H1 (cell line): ENCODE measurements at regions of chr13 and their contacts with region 1.

Region 1: GRCh38 chr13:30421093-30422053 is 920 bp upstream of the UBE2L5 start:
- DNase-seq: peak in 1 of 2 experiments; percentile 78
- H3K4me3 ChIP-seq: peak overlapping the region; percentile 73 to 83 (median 76)
- H3K27ac ChIP-seq: no peak overlapping the region; the same call in 1 of the 2 replicates
- H3K4me1 ChIP-seq: peaks cover 0 to 9% (median 5%) of the 10 kb centered on the region in 4 experiments; a peak in 6 of 7 replicates
- H3K27me3 ChIP-seq: peaks cover 0 to 5% (median 0%) of the 10 kb centered on the region in 4 experiments; a peak in 4 of 7 replicates
- CTCF ChIP-seq: no peak
- EP300 ChIP-seq: no peak
- POLR2A ChIP-seq: no peak
- RAD21 ChIP-seq: no peak

Region 2: DNA sequence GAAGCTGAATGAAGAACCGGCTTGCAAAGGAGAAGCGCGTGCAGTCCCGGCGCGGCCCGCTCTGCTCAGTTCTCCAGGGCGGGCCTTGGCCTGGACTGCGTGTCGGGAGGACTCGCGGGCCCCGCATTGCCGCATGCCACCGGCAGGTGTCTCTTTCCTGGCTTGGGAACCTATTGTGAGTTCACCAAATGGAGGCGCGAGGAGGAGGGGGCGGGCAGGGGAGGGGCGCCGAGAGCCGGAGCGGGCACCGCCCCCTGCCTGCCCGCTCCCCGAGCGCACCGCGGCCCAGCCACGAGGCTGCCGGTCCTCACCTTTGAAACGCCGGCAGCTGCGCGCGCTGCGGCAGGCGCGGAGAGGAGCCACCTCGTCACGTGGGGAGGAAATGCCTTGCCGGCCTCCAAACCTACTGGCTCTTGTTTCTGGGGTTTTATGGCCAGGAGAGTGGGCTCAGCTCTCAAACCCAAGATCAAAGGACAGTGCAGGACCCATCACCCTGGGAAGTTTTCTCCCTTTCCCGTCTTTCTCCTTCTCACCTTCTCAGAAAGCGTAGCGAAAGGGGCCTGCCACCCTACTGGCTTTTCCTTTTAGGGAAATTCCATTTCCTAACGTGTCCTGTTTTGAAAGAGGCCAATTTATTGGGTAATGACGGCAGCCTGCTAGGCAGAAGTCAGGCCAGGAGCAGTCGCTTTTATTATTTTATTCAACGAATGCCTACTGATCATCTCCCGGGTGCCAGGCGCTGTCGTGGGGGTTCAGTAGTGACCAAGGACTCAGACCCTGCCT is 12.9 kb before region 1 on chr13:
- CTCF ChIA-PET with region 1: interaction called, 42 read pairs
- POLR2A ChIA-PET with region 1: interaction called, 12 read pairs
- DNase-seq: peak; percentile 92 to 97
- H3K4me3 ChIP-seq: peak overlapping the region; percentile 3 to 54 (median 13); a peak in 5 of 8 replicates
- H3K27ac ChIP-seq: peak overlapping the region; percentile 20; the same call in 1 of the 2 replicates
- H3K4me1 ChIP-seq: peaks cover 3 to 7% (median 6%) of the 10 kb centered on the region in 4 experiments
- H3K27me3 ChIP-seq: peaks cover 0 to 12% (median 8%) of the 10 kb centered on the region in 4 experiments; a peak in 6 of 7 replicates
- CTCF ChIP-seq: peak; percentile 68 to 77 (median 69)
- EP300 ChIP-seq: no peak
- POLR2A ChIP-seq: peak in 1 of 2 experiments; percentile 56; a peak in 2 of 3 replicates
- RAD21 ChIP-seq: peak; percentile 48 to 65